B cell (primary cell): ENCODE measurements at regions of chr2 and their contacts with region 1.

Region 1: DNA sequence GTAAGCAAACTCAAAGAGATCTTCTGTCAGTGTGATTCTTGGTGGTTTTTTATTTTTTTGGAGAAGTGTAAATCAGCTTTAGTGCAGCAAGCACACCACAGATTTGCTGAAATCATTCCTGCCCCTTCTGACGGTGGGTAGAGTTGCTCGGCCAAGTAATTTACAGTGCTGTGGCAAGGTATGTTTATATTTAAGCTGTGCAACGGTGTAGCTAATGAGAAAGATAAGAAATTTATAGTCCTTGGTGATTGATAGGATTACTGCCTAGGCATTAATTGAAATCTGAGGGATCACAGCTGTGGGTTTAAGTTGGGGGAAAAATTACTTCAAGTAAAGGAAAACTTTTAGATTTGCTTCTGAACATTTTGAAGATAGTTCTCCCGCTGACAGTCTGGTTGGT is 286.6 kb downstream of the AGAP1 start:
- DNase-seq: no peak
- ATAC-seq: no peak
- H3K4me3 ChIP-seq: no peak overlapping the region
- H3K4me3 Mint-ChIP-seq: no peak overlapping the region
- H3K27ac ChIP-seq: no peak overlapping the region
- H3K27ac Mint-ChIP-seq: no peak overlapping the region
- H3K4me1 ChIP-seq: no peaks in the 10 kb centered on the region
- H3K4me1 Mint-ChIP-seq: no peaks in the 10 kb centered on the region
- H3K27me3 ChIP-seq: peaks cover 0 to 3% (median 0%) of the 10 kb centered on the region in 4 experiments
- H3K27me3 Mint-ChIP-seq: peaks cover 24% of the 10 kb centered on the region
- CTCF ChIP-seq: no peak

Region 2: GRCh38 chr2:235716899-235717442 is 63.4 kb before region 1 on chr2:
- CTCF ChIA-PET with region 1: no interaction called
- POLR2A ChIA-PET with region 1: no interaction called
- intact Hi-C with region 1: no loop called
- DNase-seq: no peak
- ATAC-seq: no peak
- H3K4me3 ChIP-seq: no peak overlapping the region
- H3K4me3 Mint-ChIP-seq: no peak overlapping the region
- H3K27ac ChIP-seq: no peak overlapping the region
- H3K27ac Mint-ChIP-seq: no peak overlapping the region
- H3K4me1 ChIP-seq: no peaks in the 10 kb centered on the region
- H3K4me1 Mint-ChIP-seq: no peaks in the 10 kb centered on the region
- H3K27me3 ChIP-seq: no peaks in the 10 kb centered on the region
- H3K27me3 Mint-ChIP-seq: peaks cover 13% of the 10 kb centered on the region
- CTCF ChIP-seq: no peak

Region 3: DNA sequence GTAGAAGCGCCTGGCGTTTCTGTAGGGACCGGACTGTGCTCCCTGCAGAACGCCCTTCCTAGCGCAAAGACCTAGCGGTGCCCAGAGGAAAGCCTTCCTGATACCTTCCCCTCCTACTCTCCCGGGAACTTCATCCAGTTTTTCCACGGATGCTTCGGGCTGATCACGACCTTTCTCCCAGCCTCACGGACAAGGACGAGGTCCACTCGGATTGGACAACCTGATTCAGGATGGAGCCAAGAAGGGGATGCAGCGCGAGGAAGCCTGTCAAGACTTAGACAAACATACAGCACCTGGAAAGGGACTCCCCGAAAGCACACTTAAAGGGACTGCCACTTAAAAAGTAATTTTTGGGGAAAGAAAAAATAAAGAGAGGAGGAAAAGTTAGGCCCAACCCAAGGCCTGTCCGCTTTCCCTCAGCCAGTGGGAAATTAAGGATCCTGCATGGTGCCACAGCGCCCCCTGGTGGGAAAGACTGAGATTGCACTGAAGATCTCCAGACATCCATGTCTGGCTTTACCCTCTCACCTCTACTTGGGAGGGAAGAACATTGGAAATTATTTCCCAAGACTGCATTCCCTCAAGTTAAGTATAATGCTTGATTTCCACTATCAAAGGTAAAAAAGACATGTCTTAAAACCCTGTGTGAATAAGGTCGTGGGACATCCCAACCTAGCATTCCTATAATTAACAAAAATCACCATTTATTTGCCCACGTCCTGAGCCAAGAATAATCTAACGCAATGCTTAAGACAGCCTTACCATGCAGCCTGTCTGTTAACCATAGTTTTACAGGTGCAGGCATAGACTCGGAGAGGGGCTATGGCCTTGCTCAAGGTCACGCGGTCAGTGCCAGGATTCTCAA is 1291.9 kb after region 1 on chr2:
- CTCF ChIA-PET with region 1: interaction called, 3 read pairs
- POLR2A ChIA-PET with region 1: no interaction called
- intact Hi-C with region 1: loop called (anchors 5 kb)
- DNase-seq: peak; percentile 70
- ATAC-seq: peak; percentile 47
- H3K4me3 ChIP-seq: no peak overlapping the region
- H3K4me3 Mint-ChIP-seq: no peak overlapping the region
- H3K27ac ChIP-seq: no peak overlapping the region
- H3K27ac Mint-ChIP-seq: no peak overlapping the region
- H3K4me1 ChIP-seq: no peaks in the 10 kb centered on the region
- H3K4me1 Mint-ChIP-seq: no peaks in the 10 kb centered on the region
- H3K27me3 ChIP-seq: no peaks in the 10 kb centered on the region
- H3K27me3 Mint-ChIP-seq: no peaks in the 10 kb centered on the region
- CTCF ChIP-seq: peak; percentile 99